Panc1 (cell line): ENCODE measurements at regions of chr12 and their contacts with region 1.

Region 1: DNA sequence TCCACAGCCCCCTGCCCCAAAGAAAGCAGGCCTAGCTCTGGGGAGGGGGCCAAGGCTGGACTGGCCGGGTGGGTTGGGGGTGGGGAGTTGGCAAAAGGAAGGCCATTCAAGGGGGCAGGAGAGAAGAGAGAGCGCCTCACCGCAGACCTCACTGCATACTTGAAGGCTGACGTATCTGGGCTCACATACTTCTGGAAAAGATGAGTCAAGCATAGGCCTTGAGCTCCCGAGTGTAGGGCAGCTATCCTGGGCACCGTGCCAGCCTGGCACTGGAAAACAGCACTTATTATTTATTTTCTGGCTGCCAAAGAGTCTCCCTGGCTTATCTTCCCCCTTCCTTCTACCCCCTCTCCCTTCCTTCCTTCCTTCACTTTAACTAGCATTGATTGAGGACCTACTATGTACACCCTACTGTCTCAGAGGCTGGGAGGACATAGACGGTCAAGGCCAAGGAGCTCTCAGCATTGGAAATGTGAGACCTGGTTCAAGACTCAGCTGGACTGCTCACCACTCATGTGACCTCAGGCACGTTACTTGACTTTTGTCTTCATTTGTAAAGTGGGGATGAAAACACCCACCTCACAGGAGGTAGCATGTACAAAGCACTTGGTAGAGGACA is 468 bp upstream of the KRT80 start:
- DNase-seq: peak; percentile 96
- ATAC-seq: peak; percentile 92
- H3K4me3 ChIP-seq: peak overlapping the region in 1 of 2 experiments; percentile 67; a peak in 3 of 4 replicates
- H3K27ac ChIP-seq: peak overlapping the region; percentile 95
- H3K4me1 ChIP-seq: peaks cover 80% of the 10 kb centered on the region
- H3K27me3 ChIP-seq: no peaks in the 10 kb centered on the region
- CTCF ChIP-seq: no peak

Region 2: GRCh38 chr12:51855596-51856428 is 336.5 kb before region 1 on chr12:
- CTCF ChIA-PET with region 1: no interaction called
- POLR2A ChIA-PET with region 1: interaction called, 15 read pairs
- in situ Hi-C with region 1: no loop called
- intact Hi-C with region 1: no loop called
- DNase-seq: no peak
- ATAC-seq: peak; percentile 68
- H3K4me3 ChIP-seq: peak overlapping the region; percentile 1 to 14; a peak in 1 of 4 replicates
- H3K27ac ChIP-seq: no peak overlapping the region
- H3K4me1 ChIP-seq: peaks cover 7% of the 10 kb centered on the region; the same call in 1 of the 2 replicates
- H3K27me3 ChIP-seq: no peaks in the 10 kb centered on the region
- CTCF ChIP-seq: no peak

Region 3: DNA sequence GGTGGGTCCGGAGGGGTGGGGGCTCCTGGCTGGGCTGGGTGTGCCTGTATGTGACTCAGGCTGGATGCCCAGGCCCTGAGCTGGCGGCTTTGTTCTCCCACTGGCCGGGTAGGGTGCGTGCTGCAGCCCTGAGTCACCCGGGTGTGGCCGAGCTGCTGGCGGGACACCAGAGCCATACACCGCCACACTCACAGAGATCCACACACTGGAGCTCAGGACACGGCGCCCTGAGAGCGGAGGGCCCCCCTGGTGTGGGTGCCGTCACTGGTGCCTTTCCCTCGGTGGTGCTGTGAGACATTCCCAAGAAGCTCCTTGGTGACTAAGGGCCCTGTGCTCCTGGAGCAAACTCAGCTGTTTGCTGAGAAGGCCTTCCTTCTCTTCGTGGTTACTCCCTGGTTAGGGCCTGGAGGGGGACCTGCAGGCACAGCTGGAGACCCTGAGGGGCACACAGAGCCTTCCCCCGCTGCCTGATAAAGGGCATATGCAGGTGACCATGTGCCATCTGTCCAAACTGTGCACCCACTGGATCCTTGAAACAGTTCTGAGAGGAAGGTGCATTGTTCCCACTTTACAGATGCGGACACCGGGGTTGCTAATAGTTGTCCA is 44.8 kb before region 1 on chr12:
- CTCF ChIA-PET with region 1: no interaction called
- POLR2A ChIA-PET with region 1: no interaction called
- in situ Hi-C with region 1: no loop called
- intact Hi-C with region 1: no loop called
- DNase-seq: peak; percentile 94
- ATAC-seq: peak; percentile 84
- H3K4me3 ChIP-seq: no peak overlapping the region
- H3K27ac ChIP-seq: peak overlapping the region; percentile 97
- H3K4me1 ChIP-seq: peaks cover 72% of the 10 kb centered on the region
- H3K27me3 ChIP-seq: no peaks in the 10 kb centered on the region
- CTCF ChIP-seq: no peak

Region 4: DNA sequence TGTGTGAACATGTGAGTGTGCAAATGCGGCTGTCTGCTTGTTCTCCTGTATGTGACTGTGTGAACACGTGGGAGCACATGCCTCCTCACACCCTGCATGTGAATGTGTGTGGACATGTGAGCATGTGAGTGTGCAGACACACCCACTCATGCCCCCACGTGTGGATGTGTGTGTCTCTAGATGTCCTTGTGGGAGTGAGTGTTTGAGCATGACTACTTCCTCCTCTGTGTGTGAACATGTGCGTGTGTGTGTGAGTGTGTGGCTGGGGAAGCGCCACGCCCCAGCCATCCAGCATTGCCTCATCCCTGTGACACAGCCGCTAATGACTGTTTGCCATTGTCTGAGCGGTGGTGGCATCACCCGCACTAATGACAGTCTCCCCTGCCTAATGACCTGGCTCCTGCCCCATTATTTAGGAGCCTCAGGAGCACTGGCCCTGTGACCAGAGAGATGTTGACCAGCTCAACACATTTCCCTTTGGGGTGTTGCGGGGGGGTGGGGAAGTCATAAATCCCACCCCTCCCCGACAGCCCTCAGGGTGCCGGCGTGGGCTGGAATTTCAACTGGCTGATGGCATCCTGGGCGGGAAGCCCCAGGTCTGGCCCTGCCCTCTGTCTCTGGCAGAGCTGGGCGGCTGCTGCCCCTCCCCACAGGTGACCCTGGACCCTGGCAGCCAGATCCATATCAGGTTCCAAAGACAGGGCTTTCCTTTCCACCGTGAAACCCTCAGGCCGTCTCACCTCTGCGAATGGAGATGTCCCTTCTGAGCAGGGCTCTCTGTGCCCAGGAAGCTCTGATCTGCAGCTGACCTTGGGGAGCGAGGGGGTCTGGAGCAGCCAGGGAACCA is 11.0 kb after region 1 on chr12:
- CTCF ChIA-PET with region 1: interaction called, 4 read pairs
- POLR2A ChIA-PET with region 1: interaction called, 11 read pairs
- in situ Hi-C with region 1: no loop called
- intact Hi-C with region 1: no loop called
- DNase-seq: no peak
- ATAC-seq: peak; percentile 62
- H3K4me3 ChIP-seq: no peak overlapping the region
- H3K27ac ChIP-seq: peak overlapping the region; percentile 73
- H3K4me1 ChIP-seq: peaks cover 72% of the 10 kb centered on the region
- H3K27me3 ChIP-seq: no peaks in the 10 kb centered on the region
- CTCF ChIP-seq: no peak